ENCODE measurements at regions of chr13 and their contacts with region 1.

Region 1: DNA sequence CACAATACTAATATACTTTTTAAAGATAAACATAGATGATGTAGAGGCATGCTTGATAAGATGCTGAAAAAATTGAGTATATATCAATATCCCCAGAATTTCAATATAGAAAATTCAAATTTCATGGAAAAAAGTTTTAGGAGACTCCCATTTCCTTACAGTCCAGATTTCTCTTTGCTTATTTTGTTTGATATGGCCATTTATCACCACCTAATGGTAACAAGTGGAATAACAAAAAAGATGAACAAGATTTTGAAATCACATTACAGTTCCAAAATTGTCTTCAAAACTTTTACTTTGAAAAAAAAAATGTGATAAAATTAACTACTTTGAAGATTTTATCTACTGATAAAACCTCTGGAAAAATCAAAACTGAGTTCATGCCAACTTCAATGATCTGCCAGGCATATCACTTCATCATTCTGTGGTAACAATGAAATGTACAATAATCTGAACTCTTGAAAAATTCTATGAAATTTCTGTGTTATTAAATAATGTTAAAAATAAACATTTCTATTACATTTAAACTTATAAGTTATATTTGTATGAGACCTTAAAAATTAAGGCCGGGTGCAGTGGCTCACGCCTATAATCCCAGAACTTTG is 17.5 kb downstream of the MIPEP start:
- DNase-seq: no peak
- H3K4me3 Mint-ChIP-seq: no peak overlapping the region
- H3K27ac Mint-ChIP-seq: no peak overlapping the region
- H3K4me1 Mint-ChIP-seq: no peaks in the 10 kb centered on the region
- H3K27me3 Mint-ChIP-seq: no peaks in the 10 kb centered on the region

Region 2: DNA sequence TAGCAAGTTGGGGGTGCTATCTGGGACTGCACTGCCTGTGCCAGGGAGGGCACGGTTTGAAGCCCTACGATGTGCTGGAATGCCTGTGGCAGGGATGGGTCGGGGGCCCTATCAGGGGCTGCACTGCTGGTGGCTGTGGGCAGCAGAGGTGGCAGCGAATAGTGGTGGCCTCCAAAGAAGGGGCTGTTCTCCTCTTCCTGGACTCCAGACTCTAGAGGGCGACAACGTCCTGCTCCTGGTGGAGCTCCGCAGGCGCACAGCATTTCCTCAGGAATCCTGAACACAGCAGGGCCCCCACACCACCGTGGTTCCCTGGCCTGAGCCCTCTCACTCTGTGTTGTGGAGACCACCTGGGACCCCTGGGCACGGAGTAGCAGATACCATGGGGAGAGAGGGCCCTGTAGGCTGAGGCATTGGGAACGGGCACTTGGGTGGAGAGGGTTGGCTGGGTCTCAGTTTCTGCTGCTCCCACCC is 155.9 kb before region 1 on chr13:
- CTCF ChIA-PET with region 1: interaction called, 4 read pairs
- POLR2A ChIA-PET with region 1: no interaction called
- intact Hi-C with region 1: loop called (anchors 5 kb)
- DNase-seq: peak; percentile 19
- H3K4me3 Mint-ChIP-seq: no peak overlapping the region
- H3K27ac Mint-ChIP-seq: no peak overlapping the region
- H3K4me1 Mint-ChIP-seq: peaks cover 13% of the 10 kb centered on the region
- H3K27me3 Mint-ChIP-seq: peaks cover 1% of the 10 kb centered on the region